ENCODE measurements at regions of chr16 and their contacts with region 1.

Region 1: GRCh38 chr16:46689365-46690280 is at the start of gene ORC6:
- DNase-seq: peak; percentile 81 to 97
- H3K4me3 ChIP-seq: peak within 1 kb of the TSS; percentile 88 to 96 (median 92)
- H3K27ac ChIP-seq: peak within 1 kb of the TSS; percentile 89
- H3K4me1 ChIP-seq: peaks cover 2 to 13% (median 5%) of the 10 kb centered on the region in 4 experiments; a peak in 5 of 7 replicates
- H3K27me3 ChIP-seq: no peaks in the 10 kb centered on the region
- CTCF ChIP-seq: peak; percentile 46 to 70 (median 54)
- EP300 ChIP-seq: no peak
- POLR2A ChIP-seq: peak; percentile 74 to 87; a peak in 2 of 3 replicates
- RAD21 ChIP-seq: peak in 1 of 2 experiments; percentile 51; a peak in 3 of 4 replicates
- total RNA-seq, gene ORC6: 64.7 and 67.4 TPM in 2 replicates

Region 2: DNA sequence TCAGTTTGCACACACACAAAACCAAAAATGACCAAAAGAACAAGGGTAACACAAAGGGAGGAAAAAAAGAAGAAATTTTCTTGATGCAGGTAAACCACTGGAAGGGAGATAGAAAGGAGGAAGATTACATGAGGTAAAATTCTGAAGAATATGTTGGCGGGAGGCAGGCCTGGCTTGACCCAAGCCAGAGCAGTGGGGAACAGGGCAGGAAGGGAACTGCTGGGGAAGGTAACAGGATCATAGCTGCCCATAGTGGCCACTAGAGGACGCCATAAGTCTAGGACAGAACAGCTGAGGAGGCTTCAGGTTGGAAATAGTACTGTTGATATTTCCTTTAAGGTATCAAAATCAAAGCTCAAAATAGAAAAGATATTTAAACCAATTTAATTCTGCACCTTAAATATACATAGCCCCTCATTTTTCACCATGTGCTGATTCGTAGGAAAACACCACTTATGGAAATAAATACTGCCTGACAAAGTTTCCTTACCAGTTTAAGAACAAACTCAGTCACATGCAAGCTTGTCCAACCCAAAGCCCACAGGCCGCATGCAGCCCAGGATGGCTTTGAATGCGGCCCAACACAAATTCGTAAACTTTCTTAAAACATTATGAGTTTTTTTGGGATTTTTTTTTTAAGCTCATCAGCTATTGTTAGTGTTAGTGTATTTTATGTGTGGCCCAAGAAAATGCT is 16.2 kb before region 1 on chr16:
- CTCF ChIA-PET with region 1: interaction called, 11 read pairs
- POLR2A ChIA-PET with region 1: interaction called, 4 read pairs
- DNase-seq: peak in 1 of 2 experiments; percentile 58
- H3K4me3 ChIP-seq: no peak overlapping the region
- H3K27ac ChIP-seq: no peak overlapping the region
- H3K4me1 ChIP-seq: no peaks in the 10 kb centered on the region
- H3K27me3 ChIP-seq: no peaks in the 10 kb centered on the region
- CTCF ChIP-seq: peak; percentile 89 to 97 (median 91)
- EP300 ChIP-seq: no peak
- POLR2A ChIP-seq: no peak
- RAD21 ChIP-seq: peak; percentile 87 to 89

Region 3: GRCh38 chr16:46701615-46702014 is 12.0 kb after region 1 on chr16:
- CTCF ChIA-PET with region 1: interaction called, 6 read pairs
- POLR2A ChIA-PET with region 1: interaction called, 13 read pairs
- DNase-seq: no peak
- H3K4me3 ChIP-seq: no peak overlapping the region
- H3K27ac ChIP-seq: no peak overlapping the region
- H3K4me1 ChIP-seq: no peaks in the 10 kb centered on the region
- H3K27me3 ChIP-seq: no peaks in the 10 kb centered on the region
- CTCF ChIP-seq: no peak
- EP300 ChIP-seq: no peak
- POLR2A ChIP-seq: no peak
- RAD21 ChIP-seq: no peak

Region 4: DNA sequence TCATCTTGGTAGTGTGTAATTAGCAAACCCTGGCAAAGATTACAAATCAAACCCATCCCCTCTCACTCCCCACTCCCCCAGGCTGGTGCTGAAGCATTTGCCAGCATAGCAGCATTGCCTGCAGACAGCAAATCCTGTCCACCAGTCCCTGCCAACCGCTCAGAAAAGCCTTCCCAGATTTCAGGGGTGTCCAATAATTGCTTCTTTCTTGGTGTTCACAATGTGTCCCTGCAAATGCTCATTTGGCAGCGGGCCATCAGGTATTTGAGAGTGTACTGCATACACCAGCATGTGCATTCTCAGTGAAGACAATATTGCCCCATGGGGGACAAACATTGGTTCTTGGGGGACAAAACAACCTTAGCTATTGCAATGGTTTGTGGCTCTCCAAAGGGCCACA is 28.1 kb after region 1 on chr16:
- CTCF ChIA-PET with region 1: no interaction called
- POLR2A ChIA-PET with region 1: no interaction called
- DNase-seq: peak in 1 of 2 experiments; percentile 28
- H3K4me3 ChIP-seq: no peak overlapping the region
- H3K27ac ChIP-seq: no peak overlapping the region
- H3K4me1 ChIP-seq: no peaks in the 10 kb centered on the region
- H3K27me3 ChIP-seq: no peaks in the 10 kb centered on the region
- CTCF ChIP-seq: no peak
- EP300 ChIP-seq: no peak
- POLR2A ChIP-seq: no peak
- RAD21 ChIP-seq: no peak

Region 5: GRCh38 chr16:46743238-46743719 is 53.7 kb after region 1 on chr16:
- CTCF ChIA-PET with region 1: no interaction called
- POLR2A ChIA-PET with region 1: no interaction called
- DNase-seq: no peak
- H3K4me3 ChIP-seq: no peak overlapping the region
- H3K27ac ChIP-seq: no peak overlapping the region
- H3K4me1 ChIP-seq: peaks cover 0 to 19% (median 4%) of the 10 kb centered on the region in 4 experiments; a peak in 6 of 7 replicates
- H3K27me3 ChIP-seq: no peaks in the 10 kb centered on the region
- CTCF ChIP-seq: no peak
- EP300 ChIP-seq: no peak
- POLR2A ChIP-seq: no peak
- RAD21 ChIP-seq: no peak

Region 6: DNA sequence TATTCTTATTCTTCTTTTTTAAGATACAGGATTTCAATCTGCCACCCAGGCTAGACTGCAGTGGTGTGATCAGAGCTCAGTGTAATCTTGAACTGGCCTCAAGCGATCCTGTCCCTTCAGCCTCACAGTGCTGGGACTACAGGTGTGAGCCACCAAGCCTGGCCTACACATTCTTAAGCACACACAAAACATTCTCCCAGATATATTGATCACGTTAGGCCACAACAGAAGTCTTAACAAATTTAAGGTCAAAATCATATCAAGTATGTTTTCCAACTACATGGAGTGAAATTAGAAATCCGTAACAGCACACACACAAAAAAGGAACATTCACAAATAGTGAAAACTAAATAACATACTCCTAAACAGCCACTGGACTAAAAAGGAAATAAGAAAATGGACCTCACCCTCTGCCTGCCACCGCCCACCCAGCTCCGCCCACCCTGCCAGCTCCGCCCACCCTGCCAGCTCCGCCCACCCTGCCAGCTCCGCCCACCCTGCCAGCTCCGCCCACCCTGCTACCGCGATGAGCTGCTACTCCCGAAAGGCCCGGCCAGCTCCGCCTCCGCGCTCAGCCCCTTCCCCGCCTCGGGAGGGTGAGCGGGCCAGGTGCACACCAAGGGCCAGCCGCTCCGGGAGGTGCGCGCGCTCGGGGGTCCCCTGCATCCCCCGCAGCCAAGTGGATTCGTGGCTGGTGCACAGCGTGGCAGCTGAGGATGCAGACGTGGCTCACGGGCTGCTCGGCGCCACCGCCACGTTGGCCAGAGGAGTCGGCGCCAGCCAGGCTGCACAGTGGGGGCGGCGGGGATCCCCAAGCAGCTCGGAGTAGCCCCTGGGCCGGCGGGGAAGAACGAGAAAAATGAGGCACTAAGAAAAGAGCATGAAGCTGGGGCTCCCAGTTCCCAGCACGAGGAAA is 100.1 kb after region 1 on chr16:
- CTCF ChIA-PET with region 1: interaction called, 6 read pairs
- POLR2A ChIA-PET with region 1: interaction called, 10 read pairs
- DNase-seq: peak; percentile 44 to 90
- H3K4me3 ChIP-seq: peak overlapping the region; percentile 69 to 87 (median 76)
- H3K27ac ChIP-seq: peak overlapping the region; percentile 69; the same call in 1 of the 2 replicates
- H3K4me1 ChIP-seq: peaks cover 0 to 9% (median 6%) of the 10 kb centered on the region in 4 experiments; a peak in 6 of 7 replicates
- H3K27me3 ChIP-seq: no peaks in the 10 kb centered on the region
- CTCF ChIP-seq: no peak
- EP300 ChIP-seq: no peak
- POLR2A ChIP-seq: peak; percentile 79 to 90
- RAD21 ChIP-seq: no peak

Region 7: DNA sequence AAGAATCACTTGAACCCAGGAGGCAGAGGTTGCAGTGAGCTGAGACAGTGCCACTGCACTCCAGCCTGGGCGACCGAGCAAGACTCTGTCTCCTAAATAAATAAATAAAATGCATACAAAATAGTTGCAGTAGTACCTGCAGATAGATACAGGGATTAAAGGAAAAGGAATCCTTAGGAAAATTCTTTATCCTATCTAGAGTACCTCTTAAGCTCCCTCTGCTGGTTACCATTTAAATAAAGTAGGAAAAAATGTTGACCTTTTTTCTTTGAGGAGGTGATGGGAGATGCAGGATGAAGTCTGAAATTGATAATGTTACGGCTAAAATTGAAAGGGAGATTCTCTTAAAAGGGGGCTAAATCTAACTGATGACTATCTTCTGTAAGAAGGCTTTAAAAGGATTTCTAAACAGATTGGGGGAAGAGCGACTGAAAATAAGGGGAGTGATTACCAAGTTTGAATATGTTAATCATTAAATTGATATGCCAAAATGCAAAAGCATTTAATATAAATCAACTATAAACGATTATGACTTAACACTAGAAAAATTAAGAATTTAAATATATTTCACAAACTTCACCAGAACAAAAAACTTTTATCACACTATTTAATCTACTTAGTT is 111.9 kb after region 1 on chr16:
- CTCF ChIA-PET with region 1: interaction called, 19 read pairs
- POLR2A ChIA-PET with region 1: interaction called, 3 read pairs
- DNase-seq: no peak
- H3K4me3 ChIP-seq: no peak overlapping the region
- H3K27ac ChIP-seq: no peak overlapping the region
- H3K4me1 ChIP-seq: no peaks in the 10 kb centered on the region
- H3K27me3 ChIP-seq: no peaks in the 10 kb centered on the region
- CTCF ChIP-seq: peak in 1 of 3 experiments; percentile 23; a peak in 2 of 4 replicates
- EP300 ChIP-seq: no peak
- POLR2A ChIP-seq: no peak
- RAD21 ChIP-seq: peak in 1 of 2 experiments; percentile 32; a peak in 2 of 4 replicates